ENCODE measurements at regions of chr1 and their contacts with region 1.

Region 1: GRCh38 chr1:205255941-205256780 is 28.4 kb downstream of the TMCC2 start:
- DNase-seq: peak; percentile 75 to 90
- ATAC-seq: peak; percentile 91 to 99 (median 97)
- H3K4me3 ChIP-seq: no peak overlapping the region
- H3K4me3 Mint-ChIP-seq: no peak overlapping the region
- H3K27ac ChIP-seq: no peak overlapping the region
- H3K27ac Mint-ChIP-seq: no peak overlapping the region
- H3K4me1 ChIP-seq: no peaks in the 10 kb centered on the region
- H3K4me1 Mint-ChIP-seq: peaks cover 6 to 7% of the 10 kb centered on the region in 2 donors
- H3K27me3 ChIP-seq: no peaks in the 10 kb centered on the region
- H3K27me3 Mint-ChIP-seq: peaks cover 7 to 9% of the 10 kb centered on the region in 2 donors
- CTCF ChIP-seq: peak; percentile 91

Region 2: DNA sequence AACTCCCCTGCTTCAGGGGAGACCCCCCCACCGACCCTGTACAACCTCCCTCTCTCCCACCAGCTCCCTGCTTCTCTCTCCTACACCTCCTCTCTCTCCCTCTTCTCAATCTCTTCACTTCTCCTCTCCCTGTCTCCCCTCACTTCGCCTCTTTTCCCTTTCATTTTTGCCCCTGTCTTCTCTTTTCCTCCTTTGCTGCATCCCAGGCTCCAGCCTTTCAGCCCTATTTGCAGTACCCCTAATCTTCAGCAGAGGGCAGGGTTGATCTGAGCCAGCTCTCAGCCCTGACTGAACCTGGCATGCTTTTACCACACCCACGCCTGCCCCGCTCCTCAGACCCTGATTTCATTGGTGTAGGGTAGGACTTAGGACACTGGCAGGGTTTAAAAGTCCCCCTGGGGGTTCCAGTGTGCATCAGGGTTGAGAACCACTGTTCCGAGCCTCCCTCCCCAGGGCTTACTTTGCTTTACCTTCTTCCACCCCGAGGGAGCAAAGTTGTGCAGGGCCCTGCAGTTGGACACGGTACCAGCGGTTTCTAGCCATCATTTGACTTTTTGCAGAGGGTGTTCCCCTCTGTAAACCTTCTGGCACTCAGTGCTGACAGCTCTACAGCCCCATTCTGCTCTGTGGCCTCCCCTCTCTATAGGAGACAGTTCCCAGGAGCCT is 280.5 kb before region 1 on chr1:
- intact Hi-C with region 1: loop called (anchors 1 kb)
- DNase-seq: peak in 1 of 2 donors; percentile 68
- ATAC-seq: peak; percentile 62 to 82 (median 69)
- H3K4me3 ChIP-seq: no peak overlapping the region
- H3K4me3 Mint-ChIP-seq: no peak overlapping the region
- H3K27ac ChIP-seq: no peak overlapping the region
- H3K27ac Mint-ChIP-seq: no peak overlapping the region
- H3K4me1 ChIP-seq: peaks cover 8% of the 10 kb centered on the region
- H3K4me1 Mint-ChIP-seq: no peaks in the 10 kb centered on the region
- H3K27me3 ChIP-seq: no peaks in the 10 kb centered on the region
- H3K27me3 Mint-ChIP-seq: peaks cover 6 to 34% of the 10 kb centered on the region in 2 donors
- CTCF ChIP-seq: peak; percentile 62

Region 3: GRCh38 chr1:205141236-205142101 is 114.7 kb before region 1 on chr1:
- intact Hi-C with region 1: loop called (anchors 5 kb)
- DNase-seq: peak; percentile 64 to 88
- ATAC-seq: peak; percentile 90 to 96 (median 90)
- H3K4me3 ChIP-seq: no peak overlapping the region
- H3K4me3 Mint-ChIP-seq: peak overlapping the region; percentile 17
- H3K27ac ChIP-seq: no peak overlapping the region
- H3K27ac Mint-ChIP-seq: peak overlapping the region in 1 of 2 donors; percentile 42
- H3K4me1 ChIP-seq: peaks cover 13% of the 10 kb centered on the region
- H3K4me1 Mint-ChIP-seq: peaks cover 6 to 11% of the 10 kb centered on the region in 2 donors
- H3K27me3 ChIP-seq: no peaks in the 10 kb centered on the region
- H3K27me3 Mint-ChIP-seq: no peaks in the 10 kb centered on the region
- CTCF ChIP-seq: peak; percentile 74

Region 4: GRCh38 chr1:205227584-205228006 is 28.6 kb before region 1 on chr1 and contains the start of gene TMCC2:
- intact Hi-C with region 1: loop called (anchors 2 kb)
- DNase-seq: peak; percentile 58 to 88
- ATAC-seq: peak; percentile 85 to 87 (median 86)
- H3K4me3 ChIP-seq: peak within 1 kb of the TSS; percentile 46
- H3K4me3 Mint-ChIP-seq: peak within 1 kb of the TSS; percentile 91
- H3K27ac ChIP-seq: no peak within 1 kb of the TSS
- H3K27ac Mint-ChIP-seq: peak within 1 kb of the TSS in 1 of 2 donors; percentile 14
- H3K4me1 ChIP-seq: peaks cover 28% of the 10 kb centered on the region
- H3K4me1 Mint-ChIP-seq: peaks cover 31 to 36% of the 10 kb centered on the region in 2 donors
- H3K27me3 ChIP-seq: peaks cover 9% of the 10 kb centered on the region
- H3K27me3 Mint-ChIP-seq: peaks cover 27 to 32% of the 10 kb centered on the region in 2 donors
- CTCF ChIP-seq: no peak
- total RNA-seq, gene TMCC2: 0.93 to 1.5 (median 1.1) TPM

Measured in natural killer cell (primary cell).